ENCODE measurements at regions of chr1 and their contacts with region 1.

Region 1: DNA sequence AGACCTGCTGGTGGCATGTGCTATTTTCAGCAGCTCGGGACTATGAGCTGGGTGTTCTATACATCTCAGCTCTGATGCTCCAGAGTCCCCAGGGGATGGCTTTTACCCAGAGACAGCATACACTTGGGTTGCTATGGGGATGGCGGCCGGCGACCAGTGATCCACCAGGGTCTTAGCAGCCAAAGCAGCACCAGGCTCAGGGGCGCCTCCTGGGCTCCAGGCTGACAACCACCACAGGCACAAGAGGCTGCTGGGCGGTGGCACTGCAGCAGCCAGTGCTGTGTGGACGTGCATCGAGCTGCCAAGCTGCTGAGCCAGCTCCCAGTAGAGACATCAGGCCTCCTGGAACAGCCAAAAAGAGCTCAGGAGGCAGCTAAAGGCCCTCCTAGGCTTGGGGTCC is 37.6 kb upstream of the CLSTN1 start:
- DNase-seq: peak in 1 of 10 donors; percentile 60
- H3K4me3 ChIP-seq: no peak overlapping the region
- H3K27ac ChIP-seq: peak overlapping the region in 47 of 59 donors; percentile 2 to 88 (median 52)
- H3K27me3 ChIP-seq: no peaks in the 10 kb centered on the region
- CTCF ChIP-seq: no peak

Region 2: DNA sequence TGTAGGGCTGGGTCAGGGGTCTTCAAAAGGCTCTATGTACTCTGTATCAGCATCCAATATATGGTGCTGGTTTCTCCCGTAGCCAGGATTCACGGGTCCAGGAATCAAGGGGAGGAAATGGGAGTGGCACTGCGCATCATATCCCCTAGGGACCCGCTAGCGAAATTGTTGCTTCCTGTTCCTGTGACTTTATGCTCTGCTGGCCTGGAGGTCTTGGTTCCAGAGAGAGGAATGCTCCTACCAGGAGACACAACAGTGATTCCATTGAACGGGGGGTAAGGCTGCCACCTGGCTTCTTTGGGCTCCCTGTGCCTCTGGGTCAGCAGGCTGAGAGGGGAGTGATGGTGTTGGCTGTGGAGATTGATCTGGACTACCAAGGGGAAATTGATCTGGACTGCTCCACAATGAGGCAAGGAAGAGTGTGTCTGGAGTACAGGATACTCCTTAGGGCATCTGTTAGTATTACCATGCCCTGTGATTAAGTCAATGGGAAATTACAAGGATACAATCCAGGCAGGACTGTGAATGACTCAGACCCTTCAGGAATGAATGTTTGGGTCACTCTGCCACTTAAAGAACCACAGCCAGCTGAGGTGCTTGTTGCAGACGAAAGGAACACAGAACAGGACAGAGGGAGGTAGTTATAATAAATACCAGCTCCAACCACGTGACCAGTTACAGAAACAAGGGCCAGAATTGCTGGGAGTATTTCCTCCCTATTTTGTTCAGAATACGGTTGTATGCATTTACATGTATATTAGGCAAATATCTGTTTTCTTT is 558.4 kb before region 1 on chr1:
- intact Hi-C with region 1: no loop called
- DNase-seq: no peak
- H3K4me3 ChIP-seq: no peak overlapping the region
- H3K27ac ChIP-seq: peak overlapping the region in 3 of 59 donors; percentile 0 to 25 (median 24)
- H3K27me3 ChIP-seq: no peaks in the 10 kb centered on the region
- CTCF ChIP-seq: no peak

Region 3: GRCh38 chr1:9784508-9785133 is 76.7 kb before region 1 on chr1:
- intact Hi-C with region 1: loop called in 1 of 2 experiments (anchors 5 kb)
- DNase-seq: no peak
- H3K4me3 ChIP-seq: no peak overlapping the region
- H3K27ac ChIP-seq: no peak overlapping the region
- H3K27me3 ChIP-seq: no peaks in the 10 kb centered on the region
- CTCF ChIP-seq: peak in 54 of 56 donors; percentile 38 to 72 (median 54)

Region 4: GRCh38 chr1:10217748-10218441 is 356.5 kb after region 1 on chr1:
- intact Hi-C with region 1: no loop called
- DNase-seq: no peak
- H3K4me3 ChIP-seq: peak overlapping the region in 15 of 59 donors; percentile 4 to 26 (median 12)
- H3K27ac ChIP-seq: peak overlapping the region in 56 of 59 donors; percentile 2 to 97 (median 64)
- H3K27me3 ChIP-seq: no peaks in the 10 kb centered on the region
- CTCF ChIP-seq: no peak